B cell (primary cell): ENCODE measurements at regions of chr1 and their contacts with region 1.

Region 1: DNA sequence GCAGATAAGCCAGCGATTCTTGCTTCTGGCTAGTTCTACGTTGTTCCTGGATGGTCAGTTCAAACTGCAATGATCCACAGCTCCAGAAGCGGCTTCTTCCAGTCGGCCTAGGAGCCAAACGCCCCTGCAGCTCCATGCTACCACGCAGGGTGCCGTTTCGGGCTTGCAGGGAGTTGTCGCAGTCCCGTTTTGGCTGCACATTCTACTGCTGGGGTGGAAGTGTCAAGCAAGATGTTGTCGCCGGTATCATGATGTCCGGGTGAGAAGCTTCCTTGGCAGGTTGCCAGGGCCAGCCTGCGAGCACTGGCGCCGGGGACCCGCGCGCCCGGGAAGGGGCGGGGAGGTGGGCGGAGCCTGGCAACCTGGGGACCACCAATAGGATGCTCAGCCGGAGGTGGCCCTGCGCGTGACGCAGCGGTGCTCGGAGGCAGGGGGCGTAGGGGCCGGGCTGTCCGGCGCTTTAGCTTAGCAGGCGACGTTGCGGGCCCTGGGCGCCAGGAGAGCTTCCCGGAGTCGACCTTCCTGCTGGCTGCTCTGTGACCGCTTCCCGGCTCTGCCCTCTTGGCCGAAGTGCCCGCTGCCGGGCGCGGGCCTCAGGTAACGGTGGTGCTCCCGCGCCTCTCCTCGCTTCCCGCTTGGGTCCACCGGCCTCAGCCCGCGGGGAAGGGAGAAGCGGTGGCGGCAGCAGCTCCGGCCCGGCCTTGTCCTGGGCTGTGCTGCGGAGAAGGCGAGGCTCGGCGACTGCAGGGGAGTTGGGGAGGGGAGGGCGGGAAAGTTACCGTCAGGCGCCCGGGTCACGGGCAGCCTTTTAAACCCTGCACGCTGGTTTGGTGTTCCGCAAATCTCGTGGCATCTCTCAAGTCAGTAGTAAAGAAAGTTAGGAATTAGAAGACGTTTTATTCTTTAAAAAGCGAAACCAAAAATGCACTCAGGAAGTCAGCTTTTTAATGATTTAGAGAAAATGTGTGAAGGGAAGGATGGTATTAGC is at the start of gene SOAT1:
- DNase-seq: peak; percentile 93
- ATAC-seq: peak; percentile 99
- H3K4me3 ChIP-seq: peak within 1 kb of the TSS; percentile 89 to 99 (median 92)
- H3K4me3 Mint-ChIP-seq: peak within 1 kb of the TSS; percentile 93
- H3K27ac ChIP-seq: peak within 1 kb of the TSS; percentile 79 to 84
- H3K27ac Mint-ChIP-seq: peak within 1 kb of the TSS; percentile 82
- H3K4me1 ChIP-seq: peaks cover 27 to 39% of the 10 kb centered on the region in 2 donors
- H3K4me1 Mint-ChIP-seq: peaks cover 42% of the 10 kb centered on the region
- H3K27me3 ChIP-seq: no peaks in the 10 kb centered on the region
- H3K27me3 Mint-ChIP-seq: no peaks in the 10 kb centered on the region
- CTCF ChIP-seq: peak; percentile 31
- total RNA-seq, gene SOAT1: 25.1 and 27.1 TPM in 2 replicates

Region 2: DNA sequence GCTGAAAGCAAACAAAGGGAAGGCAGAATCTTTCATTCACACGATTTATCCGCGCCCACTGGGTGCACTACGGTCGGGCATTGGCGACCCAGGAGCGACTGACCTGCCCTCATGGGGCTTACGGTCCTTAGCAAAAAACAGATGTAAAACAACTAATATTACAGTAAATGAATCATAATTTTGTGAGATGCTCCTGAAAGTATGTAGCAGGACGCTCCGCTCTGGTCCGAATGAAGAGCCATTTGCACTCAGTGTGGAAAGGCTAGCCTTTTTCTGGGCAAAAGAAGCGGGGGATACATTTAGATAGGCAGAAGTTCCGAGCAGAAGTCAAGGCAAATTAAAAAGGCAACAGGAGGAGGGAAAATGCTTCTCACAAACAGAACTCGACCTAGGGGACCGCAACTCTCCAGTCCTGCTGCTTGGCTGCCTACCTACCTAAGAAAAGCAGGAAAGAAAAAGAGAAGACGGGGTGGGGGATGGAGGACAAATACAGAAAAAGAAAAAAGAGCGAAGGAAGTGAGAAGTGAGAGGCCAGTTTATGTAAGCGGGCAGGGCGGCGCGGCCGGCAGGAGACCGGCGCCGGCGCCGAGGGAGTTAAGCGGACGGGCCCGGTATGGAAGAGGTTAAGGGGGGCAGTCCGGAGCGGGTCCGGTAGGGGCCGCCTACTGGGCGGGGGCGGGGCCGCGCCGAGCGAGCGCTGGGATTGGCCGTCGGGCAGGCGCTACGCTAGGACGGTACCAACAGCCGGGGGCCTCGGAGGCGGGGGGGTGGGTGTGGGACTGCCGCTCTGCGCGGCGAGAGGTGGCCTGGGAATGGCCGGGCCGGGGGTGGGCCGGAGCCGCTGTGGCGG is 268.3 kb before region 1 on chr1 and contains the start of gene FAM20B:
- CTCF ChIA-PET with region 1: no interaction called
- POLR2A ChIA-PET with region 1: no interaction called
- intact Hi-C with region 1: loop called (anchors 2 kb)
- DNase-seq: peak; percentile 95
- ATAC-seq: peak; percentile 80
- H3K4me3 ChIP-seq: peak within 1 kb of the TSS; percentile 77 to 97 (median 87)
- H3K4me3 Mint-ChIP-seq: peak within 1 kb of the TSS; percentile 97
- H3K27ac ChIP-seq: peak within 1 kb of the TSS; percentile 92 to 95
- H3K27ac Mint-ChIP-seq: peak within 1 kb of the TSS; percentile 95
- H3K4me1 ChIP-seq: peaks cover 29 to 36% of the 10 kb centered on the region in 2 donors
- H3K4me1 Mint-ChIP-seq: peaks cover 45% of the 10 kb centered on the region
- H3K27me3 ChIP-seq: no peaks in the 10 kb centered on the region
- H3K27me3 Mint-ChIP-seq: no peaks in the 10 kb centered on the region
- CTCF ChIP-seq: no peak
- total RNA-seq, gene FAM20B: 28.5 and 32.8 TPM in 2 replicates

Region 3: DNA sequence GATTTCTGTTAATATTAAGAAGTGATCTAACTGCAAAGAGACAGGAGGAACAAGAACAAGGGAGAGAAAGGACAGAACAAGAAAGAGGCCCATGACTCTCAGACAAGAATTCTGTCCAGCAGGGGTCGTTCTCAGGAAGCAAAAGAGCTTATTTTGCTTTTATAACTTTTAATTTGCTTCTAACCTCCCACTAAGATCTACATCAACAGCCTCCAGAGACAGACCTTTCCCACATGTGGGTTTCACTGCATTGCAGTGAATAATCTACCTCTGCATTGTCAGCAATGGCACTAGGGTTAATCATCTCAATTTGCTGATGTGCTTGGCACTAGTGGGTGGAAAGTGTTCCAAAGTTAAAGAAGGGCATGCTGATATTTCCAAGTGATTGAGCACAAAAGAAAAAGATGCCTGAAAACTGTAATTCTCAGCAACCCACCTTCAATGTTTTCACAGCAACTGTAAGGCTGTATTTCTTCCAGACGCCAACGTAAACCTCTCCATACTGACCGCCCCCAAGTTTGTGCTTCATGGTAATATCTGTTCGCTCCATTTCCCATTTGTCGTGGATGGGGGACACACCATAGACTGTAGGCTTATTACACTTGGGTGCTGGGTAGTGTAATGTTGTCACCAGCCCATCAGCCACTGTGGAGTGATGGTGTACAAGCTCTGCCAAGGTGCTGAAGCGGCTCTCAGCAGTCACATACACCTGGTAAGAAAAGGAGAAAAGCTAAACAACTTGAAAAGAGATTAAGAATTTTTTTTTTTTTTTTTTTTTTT is 172.3 kb before region 1 on chr1:
- CTCF ChIA-PET with region 1: interaction called, 4 read pairs
- POLR2A ChIA-PET with region 1: no interaction called
- intact Hi-C with region 1: loop called (anchors 1 kb)
- DNase-seq: peak; percentile 48
- ATAC-seq: no peak
- H3K4me3 ChIP-seq: no peak overlapping the region
- H3K4me3 Mint-ChIP-seq: no peak overlapping the region
- H3K27ac ChIP-seq: no peak overlapping the region
- H3K27ac Mint-ChIP-seq: peak overlapping the region; percentile 6
- H3K4me1 ChIP-seq: no peaks in the 10 kb centered on the region
- H3K4me1 Mint-ChIP-seq: peaks cover 5% of the 10 kb centered on the region
- H3K27me3 ChIP-seq: no peaks in the 10 kb centered on the region
- H3K27me3 Mint-ChIP-seq: no peaks in the 10 kb centered on the region
- CTCF ChIP-seq: peak; percentile 55

Region 4: GRCh38 chr1:179129702-179130473 is 163.7 kb before region 1 on chr1:
- CTCF ChIA-PET with region 1: no interaction called
- POLR2A ChIA-PET with region 1: no interaction called
- intact Hi-C with region 1: loop called (anchors 2 kb)
- DNase-seq: peak; percentile 79
- ATAC-seq: peak; percentile 96
- H3K4me3 ChIP-seq: peak overlapping the region in 3 of 5 experiments; percentile 10 to 42 (median 13)
- H3K4me3 Mint-ChIP-seq: peak overlapping the region; percentile 35
- H3K27ac ChIP-seq: peak overlapping the region; percentile 78 to 83
- H3K27ac Mint-ChIP-seq: peak overlapping the region; percentile 75
- H3K4me1 ChIP-seq: peaks cover 12 to 13% of the 10 kb centered on the region in 2 donors
- H3K4me1 Mint-ChIP-seq: peaks cover 16% of the 10 kb centered on the region
- H3K27me3 ChIP-seq: no peaks in the 10 kb centered on the region
- H3K27me3 Mint-ChIP-seq: no peaks in the 10 kb centered on the region
- CTCF ChIP-seq: no peak

Region 5: GRCh38 chr1:179229214-179230140 is 64.2 kb before region 1 on chr1 and contains the start of gene ABL2:
- CTCF ChIA-PET with region 1: no interaction called
- POLR2A ChIA-PET with region 1: no interaction called
- intact Hi-C with region 1: loop called (anchors 2 kb)
- DNase-seq: peak; percentile 73
- ATAC-seq: peak; percentile 72
- H3K4me3 ChIP-seq: peak within 1 kb of the TSS; percentile 62 to 87 (median 85)
- H3K4me3 Mint-ChIP-seq: peak within 1 kb of the TSS; percentile 93
- H3K27ac ChIP-seq: peak within 1 kb of the TSS in 1 of 2 donors; percentile 74
- H3K27ac Mint-ChIP-seq: peak within 1 kb of the TSS; percentile 89
- H3K4me1 ChIP-seq: peaks cover 7 to 13% of the 10 kb centered on the region in 2 donors
- H3K4me1 Mint-ChIP-seq: peaks cover 29% of the 10 kb centered on the region
- H3K27me3 ChIP-seq: no peaks in the 10 kb centered on the region
- H3K27me3 Mint-ChIP-seq: no peaks in the 10 kb centered on the region
- CTCF ChIP-seq: no peak
- total RNA-seq, gene ABL2: 20.0 and 20.7 TPM in 2 replicates